ENCODE measurements at regions of chr9 and their contacts with region 1.

Region 1: GRCh38 chr9:126398403-126399058 is 71.9 kb downstream of the MVB12B start:
- DNase-seq: peak; percentile 69
- H3K4me3 ChIP-seq: no peak overlapping the region
- H3K27ac ChIP-seq: no peak overlapping the region
- H3K4me1 ChIP-seq: no peaks in the 10 kb centered on the region
- H3K27me3 ChIP-seq: no peaks in the 10 kb centered on the region
- CTCF ChIP-seq: peak; percentile 98
- POLR2A ChIP-seq: no peak

Region 2: GRCh38 chr9:125407974-125408900 is 990.3 kb before region 1 on chr9:
- CTCF ChIA-PET with region 1: interaction called, 34 read pairs
- POLR2A ChIA-PET with region 1: no interaction called
- dilution Hi-C with region 1: no loop called
- intact Hi-C with region 1: loop called (anchors 10 kb)
- DNase-seq: peak; percentile 61
- H3K4me3 ChIP-seq: peak overlapping the region; percentile 39 to 62 (median 40)
- H3K27ac ChIP-seq: peak overlapping the region; percentile 66
- H3K4me1 ChIP-seq: peaks cover 3% of the 10 kb centered on the region
- H3K27me3 ChIP-seq: no peaks in the 10 kb centered on the region
- CTCF ChIP-seq: peak; percentile 82 to 93
- POLR2A ChIP-seq: no peak

Region 3: DNA sequence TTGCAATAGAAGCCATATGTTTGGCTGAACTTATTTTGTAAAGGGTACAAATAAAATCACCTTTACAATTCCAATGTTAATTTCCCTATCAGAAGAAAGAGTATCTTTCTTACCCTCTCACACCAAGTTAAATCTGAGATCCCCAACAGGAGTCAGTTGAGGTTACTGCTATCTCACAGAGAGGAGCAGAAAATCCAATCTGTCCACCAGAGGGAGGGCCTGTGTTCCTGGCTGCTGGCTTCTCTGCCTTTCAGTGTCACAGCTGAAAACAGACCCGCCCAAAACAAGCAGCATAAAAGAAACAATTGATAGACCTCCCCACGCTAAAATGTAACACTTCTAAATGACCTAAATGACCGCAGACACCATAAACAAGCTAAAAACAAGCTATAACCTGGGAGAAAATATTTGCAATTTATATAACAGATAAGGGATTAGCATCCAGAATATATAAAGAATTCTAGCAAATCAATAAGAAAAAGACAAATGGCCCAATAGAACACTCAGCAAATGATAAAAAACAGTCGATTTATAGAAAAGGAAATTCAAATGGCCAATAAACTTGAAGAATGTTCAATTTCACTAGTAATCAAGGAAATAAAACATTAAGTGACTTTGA is 96.4 kb before region 1 on chr9:
- CTCF ChIA-PET with region 1: interaction called, 188 read pairs
- POLR2A ChIA-PET with region 1: no interaction called
- dilution Hi-C with region 1: no loop called
- intact Hi-C with region 1: loop called (anchors 1 kb)
- DNase-seq: peak; percentile 68
- H3K4me3 ChIP-seq: no peak overlapping the region
- H3K27ac ChIP-seq: no peak overlapping the region
- H3K4me1 ChIP-seq: no peaks in the 10 kb centered on the region
- H3K27me3 ChIP-seq: peaks cover 0 to 4% of the 10 kb centered on the region in 2 experiments
- CTCF ChIP-seq: peak; percentile 68 to 79
- POLR2A ChIP-seq: no peak

Region 4: GRCh38 chr9:126317513-126317912 is 81.0 kb before region 1 on chr9:
- CTCF ChIA-PET with region 1: interaction called, 225 read pairs
- POLR2A ChIA-PET with region 1: no interaction called
- dilution Hi-C with region 1: no loop called
- intact Hi-C with region 1: loop called (anchors 1 kb)
- DNase-seq: peak; percentile 48
- H3K4me3 ChIP-seq: no peak overlapping the region
- H3K27ac ChIP-seq: no peak overlapping the region
- H3K4me1 ChIP-seq: no peaks in the 10 kb centered on the region
- H3K27me3 ChIP-seq: peaks cover 0 to 3% of the 10 kb centered on the region in 2 experiments
- CTCF ChIP-seq: peak; percentile 41 to 65
- POLR2A ChIP-seq: no peak

Region 5: DNA sequence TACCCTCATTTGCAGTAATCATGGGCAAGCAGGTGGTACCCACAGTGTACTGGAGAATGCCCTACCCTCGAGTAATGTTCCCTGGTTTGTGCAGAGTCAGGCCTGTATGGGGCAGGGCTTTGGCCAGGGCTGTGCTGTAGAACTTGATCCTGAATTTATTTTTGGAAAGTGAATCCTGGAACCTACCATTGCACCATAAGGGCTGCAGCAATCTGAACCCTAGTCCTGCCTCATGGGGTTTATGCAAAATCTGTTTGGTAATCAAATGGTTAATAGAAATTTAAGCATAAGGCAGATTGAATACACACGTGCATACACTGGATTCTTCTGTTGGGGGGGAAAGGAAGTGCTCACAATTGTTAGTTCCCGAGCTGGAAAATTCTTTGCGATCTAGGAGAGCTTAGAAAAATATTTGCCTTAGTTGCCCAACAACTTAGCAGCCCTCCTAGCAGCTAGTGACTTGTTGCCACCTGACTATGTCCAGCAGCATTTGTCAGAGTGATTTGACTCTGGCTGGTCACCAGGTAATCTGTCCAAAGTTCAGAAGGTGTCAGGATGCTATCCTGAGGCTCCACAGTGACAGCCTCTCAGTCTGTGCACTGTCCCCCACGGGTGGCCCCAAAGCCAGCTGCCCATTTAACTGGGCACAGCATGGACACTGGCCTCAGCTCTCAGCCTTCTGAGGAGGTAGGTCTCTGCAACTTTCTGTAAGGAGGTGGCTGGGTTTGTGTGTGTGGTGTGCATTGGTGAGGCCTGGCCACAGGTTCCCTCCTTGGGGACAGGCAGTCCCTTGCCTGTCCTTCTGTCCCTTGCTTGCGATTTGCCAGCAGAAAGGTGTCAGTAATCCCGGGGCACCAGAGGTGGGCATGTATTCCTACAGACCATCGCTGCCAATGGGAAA is 63.6 kb before region 1 on chr9:
- CTCF ChIA-PET with region 1: interaction called, 29 read pairs
- POLR2A ChIA-PET with region 1: no interaction called
- dilution Hi-C with region 1: no loop called
- intact Hi-C with region 1: no loop called
- DNase-seq: peak; percentile 86
- H3K4me3 ChIP-seq: no peak overlapping the region
- H3K27ac ChIP-seq: peak overlapping the region; percentile 4
- H3K4me1 ChIP-seq: peaks cover 14% of the 10 kb centered on the region
- H3K27me3 ChIP-seq: no peaks in the 10 kb centered on the region
- CTCF ChIP-seq: no peak
- POLR2A ChIP-seq: peak; percentile 48

Region 6: GRCh38 chr9:126375386-126375785 is 23.1 kb before region 1 on chr9:
- CTCF ChIA-PET with region 1: interaction called, 46 read pairs
- POLR2A ChIA-PET with region 1: no interaction called
- dilution Hi-C with region 1: no loop called
- intact Hi-C with region 1: no loop called
- DNase-seq: peak; percentile 65
- H3K4me3 ChIP-seq: no peak overlapping the region
- H3K27ac ChIP-seq: peak overlapping the region; percentile 38
- H3K4me1 ChIP-seq: peaks cover 47% of the 10 kb centered on the region
- H3K27me3 ChIP-seq: no peaks in the 10 kb centered on the region
- CTCF ChIP-seq: no peak
- POLR2A ChIP-seq: no peak

Region 7: GRCh38 chr9:126425869-126426268 is 27.3 kb after region 1 on chr9:
- CTCF ChIA-PET with region 1: interaction called, 12 read pairs
- POLR2A ChIA-PET with region 1: no interaction called
- dilution Hi-C with region 1: no loop called
- intact Hi-C with region 1: no loop called
- DNase-seq: no peak
- H3K4me3 ChIP-seq: no peak overlapping the region
- H3K27ac ChIP-seq: no peak overlapping the region
- H3K4me1 ChIP-seq: no peaks in the 10 kb centered on the region
- H3K27me3 ChIP-seq: no peaks in the 10 kb centered on the region
- CTCF ChIP-seq: no peak
- POLR2A ChIP-seq: no peak

Region 8: DNA sequence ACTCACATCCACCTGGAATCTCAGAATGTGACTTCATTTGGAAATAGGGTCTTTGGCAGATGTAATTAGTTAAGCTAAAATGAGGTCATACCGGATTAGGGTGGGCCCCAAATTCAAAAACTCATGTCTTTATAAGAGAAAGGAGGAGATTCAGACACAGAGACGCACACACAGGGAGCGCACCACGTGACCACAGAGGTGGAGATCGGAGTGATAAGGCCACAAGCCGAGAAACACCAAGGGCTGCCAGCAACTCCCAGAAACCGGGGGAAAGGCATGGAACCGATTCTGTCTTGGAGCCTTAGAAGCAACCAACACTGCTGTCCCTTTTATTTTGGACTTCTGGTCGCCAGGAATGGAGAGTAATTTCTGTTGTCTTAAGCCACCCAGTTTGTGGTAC is 183.4 kb after region 1 on chr9:
- CTCF ChIA-PET with region 1: no interaction called
- POLR2A ChIA-PET with region 1: no interaction called
- dilution Hi-C with region 1: no loop called
- intact Hi-C with region 1: no loop called
- DNase-seq: no peak
- H3K4me3 ChIP-seq: no peak overlapping the region
- H3K27ac ChIP-seq: no peak overlapping the region
- H3K4me1 ChIP-seq: no peaks in the 10 kb centered on the region
- H3K27me3 ChIP-seq: peaks cover 13 to 32% of the 10 kb centered on the region in 2 experiments
- CTCF ChIP-seq: no peak
- POLR2A ChIP-seq: no peak

Region 9: GRCh38 chr9:126673689-126674364 is 275.3 kb after region 1 on chr9:
- CTCF ChIA-PET with region 1: no interaction called
- POLR2A ChIA-PET with region 1: no interaction called
- dilution Hi-C with region 1: no loop called
- intact Hi-C with region 1: no loop called
- DNase-seq: no peak
- H3K4me3 ChIP-seq: no peak overlapping the region
- H3K27ac ChIP-seq: no peak overlapping the region
- H3K4me1 ChIP-seq: no peaks in the 10 kb centered on the region
- H3K27me3 ChIP-seq: peaks cover 52 to 63% of the 10 kb centered on the region in 2 experiments
- CTCF ChIP-seq: no peak
- POLR2A ChIP-seq: no peak

Measured in endothelial cell of umbilical vein (primary cell).